ENCODE measurements at regions of chr11 and their contacts with region 1.

Region 1: GRCh38 chr11:128949791-128950454 is 7.3 kb upstream of the TP53AIP1 start:
- DNase-seq: no peak
- H3K4me3 ChIP-seq: no peak overlapping the region
- H3K27ac ChIP-seq: no peak overlapping the region
- H3K4me1 ChIP-seq: peaks cover 0 to 3% (median 0%) of the 10 kb centered on the region in 3 donors
- H3K27me3 ChIP-seq: peaks cover 0 to 5% (median 0%) of the 10 kb centered on the region in 4 donors
- CTCF ChIP-seq: no peak
- POLR2A ChIP-seq: no peak

Region 2: DNA sequence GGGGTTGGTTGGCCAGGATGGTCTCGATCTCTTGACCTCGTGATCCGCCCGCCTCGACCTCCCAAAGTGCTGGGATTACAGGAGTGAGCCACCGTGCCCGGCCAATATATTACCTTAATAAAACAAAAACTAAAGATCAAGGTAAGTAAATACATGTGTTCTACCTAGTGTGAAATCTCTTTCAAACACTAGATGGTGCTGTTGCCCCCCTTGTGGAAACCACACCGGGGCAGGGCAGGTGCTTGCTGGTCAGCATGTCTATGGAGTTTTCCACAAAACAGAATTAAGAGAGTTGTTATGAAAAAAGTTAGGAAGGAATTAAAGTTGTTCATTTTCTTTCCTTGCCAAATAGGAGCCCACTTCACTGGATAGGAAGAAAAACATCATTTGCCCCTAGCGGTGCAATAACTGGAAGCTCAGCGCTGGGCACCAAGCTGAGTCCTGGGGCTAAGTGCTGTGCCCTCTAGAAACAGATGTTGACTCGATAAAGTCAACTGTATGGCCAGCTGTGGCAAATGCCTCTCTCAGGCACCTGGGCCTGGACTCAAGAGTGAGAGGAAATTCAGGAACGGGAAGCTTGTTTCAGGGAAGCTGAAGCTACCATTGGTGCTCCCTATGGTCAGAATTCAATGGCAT is 65.1 kb before region 1 on chr11:
- intact Hi-C with region 1: loop called (anchors 5 kb)
- DNase-seq: no peak
- H3K4me3 ChIP-seq: no peak overlapping the region
- H3K27ac ChIP-seq: no peak overlapping the region
- H3K4me1 ChIP-seq: peaks cover 0 to 29% (median 6%) of the 10 kb centered on the region in 3 donors
- H3K27me3 ChIP-seq: peaks cover 0 to 37% (median 0%) of the 10 kb centered on the region in 4 donors
- CTCF ChIP-seq: peak; percentile 75 to 91 (median 84)
- POLR2A ChIP-seq: no peak

Region 3: DNA sequence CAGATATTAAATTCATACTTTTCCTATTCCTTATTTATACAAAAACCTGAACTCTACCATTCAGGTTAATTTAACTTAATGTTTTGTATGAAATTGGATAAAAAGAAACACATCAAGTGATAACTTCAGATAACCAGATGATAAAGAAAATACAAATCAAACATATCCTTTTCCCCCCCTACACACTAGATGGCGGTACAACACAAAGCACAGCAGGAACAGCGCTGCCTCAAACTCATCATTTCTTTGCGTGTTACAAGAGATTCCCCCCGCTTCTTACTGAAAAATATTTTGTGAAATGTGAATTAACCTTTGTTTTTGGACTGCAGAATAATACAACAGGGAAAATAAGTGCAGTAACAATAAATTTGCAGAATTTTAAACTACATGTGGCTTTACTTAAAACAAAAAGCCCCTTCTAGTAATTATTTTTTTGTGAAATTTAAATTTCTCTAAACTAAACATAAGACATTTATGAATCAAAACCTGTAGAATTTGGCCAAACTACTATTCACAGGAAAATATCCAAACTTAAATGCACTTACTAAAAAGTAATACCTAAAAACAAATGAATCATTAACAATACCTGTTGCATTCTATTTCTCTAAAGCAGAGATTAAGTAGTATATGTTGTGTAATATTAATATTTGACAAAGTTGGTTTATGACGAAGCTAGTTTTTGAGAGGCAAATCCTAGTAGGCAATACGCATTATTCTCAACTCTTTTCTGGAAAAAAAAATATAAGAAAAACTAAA is 167.8 kb after region 1 on chr11:
- intact Hi-C with region 1: no loop called
- DNase-seq: no peak
- H3K4me3 ChIP-seq: no peak overlapping the region
- H3K27ac ChIP-seq: no peak overlapping the region
- H3K4me1 ChIP-seq: peaks cover 0 to 11% (median 0%) of the 10 kb centered on the region in 3 donors
- H3K27me3 ChIP-seq: no peaks in the 10 kb centered on the region
- CTCF ChIP-seq: peak; percentile 70 to 90 (median 85)
- POLR2A ChIP-seq: no peak